CD4-positive, alpha-beta T cell (primary cell): ENCODE measurements at regions of chr9 and their contacts with region 1.

Region 1: GRCh38 chr9:136790927-136791641 is at the start of gene TMEM141:
- DNase-seq: peak; percentile 99 to 100 (median 100)
- ATAC-seq: peak; percentile 83
- H3K4me3 ChIP-seq: peak within 1 kb of the TSS; percentile 77
- H3K4me3 Mint-ChIP-seq: peak within 1 kb of the TSS; percentile 91
- H3K27ac ChIP-seq: peak within 1 kb of the TSS; percentile 95
- H3K27ac Mint-ChIP-seq: peak within 1 kb of the TSS; percentile 99
- H3K4me1 ChIP-seq: peaks cover 30% of the 10 kb centered on the region
- H3K4me1 Mint-ChIP-seq: peaks cover 41% of the 10 kb centered on the region
- H3K27me3 ChIP-seq: no peaks in the 10 kb centered on the region
- H3K27me3 Mint-ChIP-seq: no peaks in the 10 kb centered on the region
- CTCF ChIP-seq: no peak
- total RNA-seq, gene TMEM141: 14.6 to 17.1 TPM

Region 2: GRCh38 chr9:136482793-136483588 is 308.1 kb before region 1 on chr9 and contains the start of gene SEC16A:
- CTCF ChIA-PET with region 1: no interaction called
- POLR2A ChIA-PET with region 1: no interaction called
- intact Hi-C with region 1: loop called in 1 of 2 experiments (anchors 10 kb)
- DNase-seq: peak; percentile 98 to 100 (median 100)
- ATAC-seq: peak; percentile 72
- H3K4me3 ChIP-seq: peak within 1 kb of the TSS; percentile 63
- H3K4me3 Mint-ChIP-seq: peak within 1 kb of the TSS; percentile 100
- H3K27ac ChIP-seq: peak within 1 kb of the TSS; percentile 97 to 99
- H3K27ac Mint-ChIP-seq: peak within 1 kb of the TSS; percentile 99
- H3K4me1 ChIP-seq: peaks cover 36% of the 10 kb centered on the region
- H3K4me1 Mint-ChIP-seq: peaks cover 49% of the 10 kb centered on the region
- H3K27me3 ChIP-seq: no peaks in the 10 kb centered on the region
- H3K27me3 Mint-ChIP-seq: no peaks in the 10 kb centered on the region
- CTCF ChIP-seq: no peak
- total RNA-seq, gene SEC16A: 73.0 to 75.0 TPM

Region 3: GRCh38 chr9:136944519-136945279 is 153.6 kb after region 1 on chr9 and contains the starts of genes C8G and FBXW5:
- CTCF ChIA-PET with region 1: interaction called, 5 read pairs
- POLR2A ChIA-PET with region 1: no interaction called
- intact Hi-C with region 1: loop called in 1 of 2 experiments (anchors 2 kb)
- DNase-seq: peak; percentile 84 to 97 (median 94)
- ATAC-seq: peak; percentile 86
- H3K4me3 ChIP-seq: peak within 1 kb of the TSS; percentile 69
- H3K4me3 Mint-ChIP-seq: peak within 1 kb of the TSS; percentile 87
- H3K27ac ChIP-seq: peak within 1 kb of the TSS in 1 of 2 donors; percentile 21
- H3K27ac Mint-ChIP-seq: peak within 1 kb of the TSS; percentile 59
- H3K4me1 ChIP-seq: peaks cover 49% of the 10 kb centered on the region
- H3K4me1 Mint-ChIP-seq: peaks cover 5% of the 10 kb centered on the region
- H3K27me3 ChIP-seq: no peaks in the 10 kb centered on the region
- H3K27me3 Mint-ChIP-seq: no peaks in the 10 kb centered on the region
- CTCF ChIP-seq: peak; percentile 96
- total RNA-seq, gene C8G: not detected
- total RNA-seq, gene FBXW5: 41.0 to 41.7 TPM

Region 4: GRCh38 chr9:137064027-137064879 is 273.2 kb after region 1 on chr9:
- CTCF ChIA-PET with region 1: interaction called, 4 read pairs
- POLR2A ChIA-PET with region 1: interaction called, 3 read pairs
- intact Hi-C with region 1: loop called (anchors 2 to 10 kb)
- DNase-seq: peak; percentile 34 to 80 (median 53)
- ATAC-seq: no peak
- H3K4me3 ChIP-seq: no peak overlapping the region
- H3K4me3 Mint-ChIP-seq: no peak overlapping the region
- H3K27ac ChIP-seq: no peak overlapping the region
- H3K27ac Mint-ChIP-seq: no peak overlapping the region
- H3K4me1 ChIP-seq: peaks cover 20% of the 10 kb centered on the region
- H3K4me1 Mint-ChIP-seq: peaks cover 6% of the 10 kb centered on the region
- H3K27me3 ChIP-seq: peaks cover 0 to 3% of the 10 kb centered on the region in 2 experiments
- H3K27me3 Mint-ChIP-seq: peaks cover 4% of the 10 kb centered on the region
- CTCF ChIP-seq: peak; percentile 84

Region 5: DNA sequence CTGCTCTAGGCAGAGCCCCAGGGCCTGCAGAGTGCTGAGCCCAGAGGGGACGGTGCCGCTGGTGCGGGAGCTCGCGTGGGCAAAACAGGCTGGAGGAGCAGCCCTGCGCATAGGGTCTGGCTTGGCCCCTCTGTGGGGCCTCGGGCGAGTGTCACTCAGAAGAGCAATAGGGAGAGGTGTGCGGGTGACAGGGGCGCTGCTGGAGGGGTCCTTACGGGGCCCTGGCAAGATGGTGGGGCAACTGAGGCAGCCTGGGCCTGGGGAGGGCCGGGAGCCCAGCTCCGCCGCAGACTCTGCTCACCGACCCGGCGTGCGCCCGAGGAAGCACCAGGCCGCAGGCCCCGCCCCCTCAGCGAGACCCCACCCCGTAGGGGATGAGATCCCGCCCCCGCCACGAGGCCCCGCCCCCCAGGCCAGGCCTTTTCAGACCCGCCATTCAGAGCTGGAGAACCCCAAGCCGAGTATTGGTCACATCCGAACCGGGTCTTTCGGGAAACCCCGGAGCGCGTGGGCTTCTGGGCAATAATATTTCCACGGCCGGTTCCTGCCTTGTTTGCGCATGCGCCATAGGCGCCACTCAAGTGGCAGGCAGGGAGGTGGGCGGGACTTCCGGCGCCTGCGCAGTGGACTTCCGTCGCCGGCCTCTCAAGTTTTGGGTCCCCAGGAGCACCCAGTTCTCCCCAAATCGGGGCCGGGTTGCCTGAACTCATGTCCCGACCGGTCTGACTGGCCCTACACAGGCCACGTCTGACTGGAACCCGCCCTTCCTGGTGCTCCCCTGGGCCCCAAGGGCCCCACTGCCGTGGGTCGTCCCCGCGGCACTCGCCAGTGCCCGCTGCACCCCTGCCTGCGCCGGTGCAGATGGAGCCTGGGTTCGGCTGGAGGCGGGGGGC is 432.2 kb after region 1 on chr9:
- CTCF ChIA-PET with region 1: no interaction called
- POLR2A ChIA-PET with region 1: no interaction called
- intact Hi-C with region 1: loop called in 1 of 2 experiments (anchors 5 kb)
- DNase-seq: peak; percentile 94 to 100 (median 98)
- ATAC-seq: peak; percentile 94
- H3K4me3 ChIP-seq: peak overlapping the region; percentile 74
- H3K4me3 Mint-ChIP-seq: peak overlapping the region; percentile 87
- H3K27ac ChIP-seq: peak overlapping the region; percentile 74 to 80
- H3K27ac Mint-ChIP-seq: peak overlapping the region; percentile 81
- H3K4me1 ChIP-seq: peaks cover 36% of the 10 kb centered on the region
- H3K4me1 Mint-ChIP-seq: peaks cover 18% of the 10 kb centered on the region
- H3K27me3 ChIP-seq: peaks cover 0 to 3% of the 10 kb centered on the region in 2 experiments
- H3K27me3 Mint-ChIP-seq: peaks cover 5% of the 10 kb centered on the region
- CTCF ChIP-seq: no peak